Ascending aorta (tissue), 2 donors: ENCODE measurements at regions of chr11 and their contacts with region 1.

Region 1: DNA sequence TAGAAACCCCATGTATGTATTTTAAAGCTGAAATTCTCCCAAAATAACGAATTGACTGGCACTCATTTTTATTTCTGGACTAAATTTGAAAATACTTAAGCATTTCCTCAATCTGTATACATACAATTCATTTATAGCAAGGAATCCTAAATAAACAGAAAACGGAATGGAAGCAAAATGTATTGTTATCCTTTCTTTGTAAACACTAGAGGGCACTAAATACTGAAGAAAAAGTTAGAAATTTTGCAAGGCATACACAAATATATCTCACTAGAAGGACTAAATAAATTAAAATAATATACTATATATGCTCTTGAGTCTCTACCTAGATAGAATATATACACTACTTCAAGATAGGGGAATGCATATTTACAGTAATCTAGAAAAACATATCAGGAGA is 23.1 kb upstream of the ANO5 start:
- DNase-seq: no peak
- H3K4me3 ChIP-seq: no peak overlapping the region
- H3K27ac ChIP-seq: no peak overlapping the region
- H3K4me1 ChIP-seq: no peaks in the 10 kb centered on the region
- H3K27me3 ChIP-seq: no peaks in the 10 kb centered on the region
- CTCF ChIP-seq: peak in 1 of 3 experiments; percentile 41

Region 2: DNA sequence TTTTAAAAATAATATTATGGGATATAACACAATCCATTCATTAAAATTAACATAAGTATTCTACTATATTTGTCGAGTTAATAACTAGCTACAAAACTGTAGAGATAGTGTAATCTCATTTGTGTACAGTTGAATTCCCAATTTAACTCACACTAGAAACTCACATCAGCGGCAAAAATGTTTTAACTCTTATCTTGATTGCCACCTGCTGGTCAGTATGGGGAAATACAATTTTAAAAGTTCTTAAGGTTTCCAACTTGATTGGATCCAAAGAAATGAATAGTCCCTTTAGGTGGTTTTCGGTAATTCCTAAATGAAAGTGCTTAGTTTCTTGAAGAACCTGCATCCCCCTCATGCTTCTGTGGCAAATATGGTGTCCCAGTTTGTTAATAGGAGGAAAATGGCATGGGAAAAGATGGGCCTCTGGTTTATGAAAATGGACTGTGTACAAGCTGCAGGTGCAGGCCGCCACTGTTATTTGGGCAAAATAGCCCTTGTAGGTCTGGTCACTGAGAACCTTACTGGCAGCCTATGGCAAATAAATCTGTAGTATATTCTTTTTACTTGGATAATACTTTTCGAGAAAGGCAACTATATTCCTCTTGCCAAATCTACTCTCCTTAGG is 134.6 kb after region 1 on chr11:
- intact Hi-C with region 1: loop called (anchors 10 kb)
- DNase-seq: no peak
- H3K4me3 ChIP-seq: no peak overlapping the region
- H3K27ac ChIP-seq: no peak overlapping the region
- H3K4me1 ChIP-seq: no peaks in the 10 kb centered on the region
- H3K27me3 ChIP-seq: no peaks in the 10 kb centered on the region
- CTCF ChIP-seq: peak in 2 of 3 experiments; percentile 39 to 62